ENCODE measurements at regions of chr12 and their contacts with region 1.

Region 1: DNA sequence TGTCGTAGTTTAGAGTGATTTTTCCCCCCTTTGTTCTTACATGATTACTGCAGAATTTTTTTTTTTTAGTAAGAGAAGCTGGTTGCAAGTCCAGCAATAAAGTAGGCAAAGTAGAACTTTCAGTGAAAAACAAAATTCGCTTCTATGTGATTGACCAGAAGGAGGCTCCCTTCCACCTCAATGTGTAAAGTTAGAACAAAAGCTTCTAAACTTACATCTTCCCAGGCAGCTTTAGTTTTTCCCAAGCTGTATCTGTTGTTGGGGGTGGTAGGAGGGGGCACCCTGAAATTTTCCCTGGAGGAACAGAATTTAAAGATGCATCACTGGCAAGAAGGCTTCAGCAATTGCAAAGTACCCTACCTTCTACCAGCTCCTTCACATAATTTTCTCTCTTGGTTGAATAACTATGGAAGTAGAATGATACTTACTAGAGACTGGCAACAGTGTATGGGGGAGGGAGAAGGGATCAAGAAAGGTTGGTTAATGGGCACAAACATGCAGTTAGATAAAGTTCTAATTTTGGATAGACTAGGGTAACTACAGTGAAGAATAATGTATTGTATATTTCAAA is 87.3 kb upstream of the E2F7 start:
- DNase-seq: no peak
- ATAC-seq: peak; percentile 72
- H3K4me3 Mint-ChIP-seq: no peak overlapping the region
- H3K27ac Mint-ChIP-seq: no peak overlapping the region
- H3K4me1 Mint-ChIP-seq: peaks cover 6% of the 10 kb centered on the region
- H3K27me3 Mint-ChIP-seq: no peaks in the 10 kb centered on the region
- CTCF ChIP-seq: peak; percentile 28; the same call in 1 of the 2 replicates

Region 2: GRCh38 chr12:77163074-77164038 is 10.6 kb after region 1 on chr12:
- CTCF ChIA-PET with region 1: interaction called, 21 read pairs
- POLR2A ChIA-PET with region 1: no interaction called
- DNase-seq: no peak
- ATAC-seq: no peak
- H3K4me3 Mint-ChIP-seq: no peak overlapping the region
- H3K27ac Mint-ChIP-seq: no peak overlapping the region
- H3K4me1 Mint-ChIP-seq: peaks cover 20% of the 10 kb centered on the region
- H3K27me3 Mint-ChIP-seq: no peaks in the 10 kb centered on the region
- CTCF ChIP-seq: no peak

Measured in WTC11 (cell line).